ENCODE measurements at regions of chr22 and their contacts with region 1.

Region 1: DNA sequence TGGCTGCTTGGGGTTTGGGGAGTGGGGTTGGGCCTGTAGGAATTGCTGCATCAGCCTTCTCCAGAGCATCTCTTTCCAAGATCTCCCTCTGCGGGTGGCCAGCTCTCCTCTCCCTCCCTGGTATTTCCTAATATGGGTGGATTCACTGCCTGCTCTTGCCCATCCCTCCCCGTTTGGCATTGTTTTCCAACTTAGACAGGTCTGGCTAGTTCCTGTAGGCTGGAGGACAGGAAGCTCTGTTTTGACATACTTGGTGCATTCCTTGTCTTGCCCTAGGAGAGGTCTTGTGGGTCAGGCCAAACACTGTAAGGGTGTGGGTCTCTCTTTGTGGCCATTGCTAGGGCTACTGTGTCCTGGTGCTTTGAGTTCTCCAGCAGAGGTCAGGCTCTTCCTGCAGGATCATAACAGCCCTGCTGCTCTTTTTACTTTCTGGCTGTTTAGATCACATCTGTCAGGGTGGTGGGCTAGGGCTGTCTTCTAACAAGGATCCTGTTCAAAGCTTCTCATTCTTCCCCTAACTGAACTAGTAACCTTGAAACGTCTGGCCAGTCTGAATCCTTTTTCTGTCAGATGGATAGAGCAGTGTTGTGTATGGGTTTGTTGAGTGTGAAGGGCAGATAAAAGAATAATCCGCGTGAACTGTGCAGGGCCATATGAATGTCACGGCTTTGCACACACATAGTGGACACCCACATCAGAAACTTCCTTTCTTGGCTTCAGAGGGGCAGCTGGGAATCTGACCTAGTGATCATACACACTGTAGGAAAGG is 18.3 kb upstream of the MICALL1 start:
- DNase-seq: peak; percentile 67
- H3K4me3 ChIP-seq: no peak overlapping the region
- CTCF ChIP-seq: peak; percentile 68

Region 2: DNA sequence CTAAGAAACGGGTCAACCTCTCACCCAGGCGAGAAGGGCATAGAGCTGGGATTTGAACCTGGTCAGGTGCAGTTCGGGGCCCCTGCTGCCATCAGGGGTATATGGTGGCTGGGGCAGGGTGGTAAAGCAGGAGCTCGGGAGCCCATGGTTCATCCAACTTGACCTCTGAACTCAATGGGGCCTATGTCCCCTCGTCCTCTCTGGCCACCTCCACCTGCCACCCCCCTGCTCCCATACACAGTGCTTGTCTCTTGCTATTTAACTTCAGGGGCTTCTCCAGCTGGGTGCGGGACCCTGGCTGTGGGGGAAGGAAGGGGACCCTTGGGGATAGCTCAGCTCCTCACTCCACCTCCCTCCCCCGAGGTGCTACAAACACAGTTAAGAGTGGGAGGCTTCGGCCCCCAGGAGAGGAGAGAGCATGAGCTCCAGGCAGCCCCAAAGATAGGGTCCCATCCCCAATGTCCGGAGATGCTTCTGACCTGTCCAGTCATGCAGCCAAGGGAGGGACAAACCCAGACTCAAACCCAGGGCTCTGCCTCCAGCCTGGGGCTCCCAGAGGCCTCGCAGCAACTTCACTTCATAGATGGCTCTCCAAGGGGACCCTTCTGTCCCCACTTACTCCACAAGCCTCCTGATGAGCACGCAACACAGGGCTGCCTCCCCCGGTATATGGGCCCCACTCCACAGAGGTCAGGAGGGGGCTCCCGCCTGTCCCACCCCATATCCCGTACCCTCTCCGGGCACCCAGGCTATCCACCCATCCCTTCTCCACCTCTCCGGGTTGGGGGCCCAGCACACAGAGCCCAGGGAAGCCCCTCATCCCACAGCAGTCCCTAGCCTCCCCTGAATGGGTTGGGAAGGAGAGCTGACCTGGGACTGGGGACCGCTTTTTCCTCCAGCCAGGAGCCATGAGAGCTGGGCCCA is 738.8 kb before region 1 on chr22:
- CTCF ChIA-PET with region 1: no interaction called
- POLR2A ChIA-PET with region 1: no interaction called
- DNase-seq: no peak
- H3K4me3 ChIP-seq: no peak overlapping the region
- CTCF ChIP-seq: no peak

Region 3: GRCh38 chr22:37910890-37911743 is 23.3 kb after region 1 on chr22:
- CTCF ChIA-PET with region 1: interaction called, 30 read pairs
- POLR2A ChIA-PET with region 1: interaction called, 8 read pairs
- DNase-seq: no peak
- H3K4me3 ChIP-seq: no peak overlapping the region
- CTCF ChIP-seq: no peak

Region 4: DNA sequence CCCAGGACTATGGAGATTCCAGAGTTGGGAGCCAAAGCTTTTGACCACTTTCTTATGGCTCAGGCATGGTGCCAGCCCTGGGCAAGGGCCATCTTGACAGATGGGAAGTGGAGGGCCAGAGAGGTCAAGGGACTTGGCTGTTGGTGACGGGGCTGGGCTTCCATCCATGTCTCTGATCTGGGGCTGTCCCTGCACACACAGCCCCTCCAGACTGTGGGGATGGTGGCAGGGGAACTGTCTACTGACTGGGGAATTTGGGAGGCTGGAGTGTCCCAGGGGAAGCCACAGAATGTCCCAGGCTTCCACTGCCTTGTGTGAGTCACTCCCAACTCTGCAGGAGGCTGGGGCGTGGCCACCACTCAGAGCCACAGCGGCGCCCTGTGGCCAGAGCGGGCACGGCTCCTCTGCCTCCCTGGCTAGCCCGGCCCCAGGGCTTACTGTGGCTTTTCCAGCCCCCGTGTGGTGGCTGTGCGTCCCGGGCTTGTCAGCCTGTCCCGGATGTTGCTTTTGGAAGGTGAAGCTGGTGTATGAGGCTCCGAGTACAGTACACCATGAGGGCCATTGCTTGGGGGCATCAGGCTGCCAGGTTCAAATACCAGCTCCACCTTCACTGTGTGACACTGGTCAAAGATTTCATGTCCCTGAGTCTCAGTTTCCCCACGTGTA is 46.0 kb after region 1 on chr22:
- CTCF ChIA-PET with region 1: interaction called, 121 read pairs
- POLR2A ChIA-PET with region 1: interaction called, 3 read pairs
- DNase-seq: peak; percentile 31
- H3K4me3 ChIP-seq: no peak overlapping the region
- CTCF ChIP-seq: peak; percentile 100

Region 5: DNA sequence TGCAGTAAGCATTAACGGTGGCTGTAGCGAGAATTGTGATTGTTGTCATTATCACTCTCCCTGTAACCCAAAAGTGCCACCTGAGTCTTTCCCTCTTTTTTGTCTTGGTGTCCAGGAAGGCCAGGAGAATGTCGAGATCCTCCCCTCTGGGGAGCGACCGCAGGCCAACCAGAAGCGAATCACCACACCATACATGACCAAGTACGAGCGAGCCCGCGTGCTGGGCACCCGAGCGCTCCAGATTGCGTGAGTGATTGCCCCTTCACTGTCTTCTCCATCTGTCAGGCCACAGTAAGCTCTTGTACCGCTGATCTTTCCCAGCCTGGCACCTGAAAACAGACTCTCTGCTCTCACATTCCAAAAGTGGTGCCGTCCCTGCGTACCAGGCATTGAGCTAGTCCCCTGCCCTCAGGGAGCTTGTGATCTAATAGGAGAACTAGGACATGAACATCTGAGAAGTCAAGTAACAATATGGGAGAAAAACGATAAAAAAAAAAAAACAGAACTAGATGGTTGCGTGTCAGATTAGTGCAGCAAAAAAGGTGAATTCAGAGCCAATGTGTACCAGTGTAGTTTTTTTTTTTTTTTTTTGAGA is 71.5 kb after region 1 on chr22:
- CTCF ChIA-PET with region 1: interaction called, 101 read pairs
- POLR2A ChIA-PET with region 1: interaction called, 3 read pairs
- DNase-seq: no peak
- H3K4me3 ChIP-seq: no peak overlapping the region
- CTCF ChIP-seq: no peak

Region 6: DNA sequence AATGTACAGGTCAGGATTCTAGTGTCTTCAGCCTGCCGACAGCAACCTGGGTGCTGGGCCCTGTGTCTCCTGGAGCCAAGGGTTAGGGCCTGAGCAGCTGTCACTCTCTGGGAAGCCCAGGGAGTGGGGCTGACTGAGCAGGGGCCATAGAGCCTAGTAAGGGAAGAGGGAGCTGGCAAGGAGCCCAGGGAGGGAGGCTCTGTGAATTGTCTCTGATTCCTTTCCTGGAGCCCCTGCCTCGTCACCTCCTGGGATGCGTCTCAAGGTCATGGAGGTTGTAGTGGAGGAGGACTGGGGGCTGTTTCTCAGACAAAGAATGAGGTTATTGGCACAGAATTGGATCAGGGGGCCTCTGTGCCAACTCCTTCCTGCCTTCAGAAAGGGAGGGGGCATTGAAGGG is 84.7 kb after region 1 on chr22:
- CTCF ChIA-PET with region 1: interaction called, 101 read pairs
- POLR2A ChIA-PET with region 1: no interaction called
- DNase-seq: no peak
- H3K4me3 ChIP-seq: no peak overlapping the region
- CTCF ChIP-seq: no peak